Gastrocnemius medialis (tissue), 4 donors: ENCODE measurements at regions of chr14 and their contacts with region 1.

Region 1: GRCh38 chr14:71138448-71139293 is 231.4 kb downstream of the PCNX1 start:
- DNase-seq: peak in 1 of 2 donors; percentile 15
- ATAC-seq: no peak
- H3K4me3 ChIP-seq: no peak overlapping the region
- H3K27ac ChIP-seq: no peak overlapping the region
- H3K4me1 ChIP-seq: no peaks in the 10 kb centered on the region
- H3K27me3 ChIP-seq: no peaks in the 10 kb centered on the region
- CTCF ChIP-seq: peak; percentile 58 to 83 (median 77)
- POLR2A ChIP-seq: no peak

Region 2: GRCh38 chr14:70809543-70810244 is 329.0 kb before region 1 on chr14:
- in situ Hi-C with region 1: no loop called
- intact Hi-C with region 1: no loop called
- DNase-seq: peak; percentile 77 to 95
- ATAC-seq: peak; percentile 90 to 92
- H3K4me3 ChIP-seq: peak overlapping the region; percentile 62 to 85 (median 76)
- H3K27ac ChIP-seq: peak overlapping the region; percentile 49 to 84 (median 80)
- H3K4me1 ChIP-seq: peaks cover 6 to 10% of the 10 kb centered on the region in 2 donors
- H3K27me3 ChIP-seq: peaks cover 0 to 6% (median 0%) of the 10 kb centered on the region in 3 donors
- CTCF ChIP-seq: no peak
- POLR2A ChIP-seq: no peak

Region 3: DNA sequence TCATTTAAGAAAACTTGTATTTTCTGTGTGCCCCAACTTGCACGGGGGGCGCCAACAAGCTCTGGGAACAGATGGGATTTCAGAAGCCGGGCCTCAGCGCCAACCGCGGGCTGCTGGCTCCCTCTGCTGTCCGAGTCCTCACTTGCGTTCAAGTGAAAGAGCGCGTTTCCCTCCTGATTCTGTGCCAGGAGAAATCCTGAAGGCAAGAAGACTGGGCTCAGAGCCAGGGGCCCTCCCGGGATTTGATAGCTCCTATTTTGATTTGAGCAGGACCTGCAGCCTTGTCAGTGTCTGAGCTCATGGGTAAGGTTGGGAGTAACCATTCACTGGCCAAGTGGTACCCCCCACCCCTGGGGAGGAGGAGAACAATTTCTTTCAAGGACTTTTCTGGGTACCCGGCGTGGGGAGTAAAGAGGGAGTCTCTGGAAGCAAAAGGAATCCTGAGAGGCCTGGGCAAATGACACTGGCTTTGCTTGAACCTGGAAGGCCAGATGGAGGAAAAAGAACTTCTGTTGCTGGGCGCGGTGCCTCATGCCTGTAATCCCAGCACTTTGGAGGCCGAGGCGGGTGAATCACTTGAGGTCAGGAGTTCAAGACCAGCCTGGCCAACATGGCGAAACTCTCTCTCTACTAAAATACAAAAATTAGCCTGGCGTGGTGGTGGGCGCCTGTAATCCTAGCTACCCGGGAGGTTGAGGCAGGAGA is 614.6 kb after region 1 on chr14:
- in situ Hi-C with region 1: loop called (anchors 5 to 10 kb)
- intact Hi-C with region 1: loop called (anchors 1 kb)
- DNase-seq: peak; percentile 39 to 60
- ATAC-seq: peak; percentile 54 to 68
- H3K4me3 ChIP-seq: peak overlapping the region in 1 of 4 donors; percentile 38
- H3K27ac ChIP-seq: no peak overlapping the region
- H3K4me1 ChIP-seq: no peaks in the 10 kb centered on the region
- H3K27me3 ChIP-seq: no peaks in the 10 kb centered on the region
- CTCF ChIP-seq: peak; percentile 44 to 82 (median 79)
- POLR2A ChIP-seq: no peak